ENCODE measurements at regions of chr6 and their contacts with region 1.

Region 1: GRCh38 chr6:144215932-144216667 is 65.8 kb downstream of the STX11 start:
- DNase-seq: peak; percentile 93 to 96
- ATAC-seq: peak; percentile 93 to 97 (median 95)
- H3K4me3 ChIP-seq: peak overlapping the region; percentile 23 to 73 (median 68)
- H3K27ac ChIP-seq: peak overlapping the region; percentile 87 to 97 (median 94)
- H3K4me1 ChIP-seq: peaks cover 0 to 31% (median 17%) of the 10 kb centered on the region in 9 donors
- H3K27me3 ChIP-seq: no peaks in the 10 kb centered on the region
- CTCF ChIP-seq: peak; percentile 56 to 75 (median 66)

Region 2: DNA sequence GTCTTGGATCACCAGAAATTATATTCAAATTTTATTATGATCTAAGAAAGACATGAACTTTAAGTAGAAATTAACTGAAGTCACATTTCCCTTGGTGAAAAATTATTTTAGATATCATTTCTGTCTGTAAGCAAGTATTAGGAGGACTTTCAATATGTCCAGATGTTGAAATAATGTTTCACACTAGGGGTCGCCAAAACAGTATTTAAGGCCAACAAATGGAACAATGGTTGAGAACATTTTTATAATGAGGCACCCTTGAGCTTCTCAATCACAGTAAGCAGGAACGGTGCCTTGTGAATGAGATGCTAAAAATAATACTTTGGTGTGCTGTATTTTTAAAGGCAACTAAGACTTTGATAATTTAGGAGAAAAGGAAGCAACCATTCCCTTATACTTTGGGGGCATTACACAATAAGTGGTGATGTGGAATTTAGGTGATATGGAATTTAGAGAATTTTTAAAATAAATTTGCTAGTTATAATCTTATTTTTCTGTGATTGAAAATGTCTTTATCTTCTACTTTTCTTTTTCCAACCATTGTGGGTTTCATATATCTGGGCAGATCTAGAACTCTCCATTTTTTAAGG is 111.1 kb before region 1 on chr6:
- intact Hi-C with region 1: loop called (anchors 1 to 5 kb)
- DNase-seq: peak in 1 of 2 donors; percentile 74
- ATAC-seq: peak; percentile 57 to 91 (median 87)
- H3K4me3 ChIP-seq: no peak overlapping the region
- H3K27ac ChIP-seq: no peak overlapping the region
- H3K4me1 ChIP-seq: peaks cover 0 to 6% (median 0%) of the 10 kb centered on the region in 9 donors
- H3K27me3 ChIP-seq: no peaks in the 10 kb centered on the region
- CTCF ChIP-seq: peak; percentile 48 to 87 (median 72)

Region 3: DNA sequence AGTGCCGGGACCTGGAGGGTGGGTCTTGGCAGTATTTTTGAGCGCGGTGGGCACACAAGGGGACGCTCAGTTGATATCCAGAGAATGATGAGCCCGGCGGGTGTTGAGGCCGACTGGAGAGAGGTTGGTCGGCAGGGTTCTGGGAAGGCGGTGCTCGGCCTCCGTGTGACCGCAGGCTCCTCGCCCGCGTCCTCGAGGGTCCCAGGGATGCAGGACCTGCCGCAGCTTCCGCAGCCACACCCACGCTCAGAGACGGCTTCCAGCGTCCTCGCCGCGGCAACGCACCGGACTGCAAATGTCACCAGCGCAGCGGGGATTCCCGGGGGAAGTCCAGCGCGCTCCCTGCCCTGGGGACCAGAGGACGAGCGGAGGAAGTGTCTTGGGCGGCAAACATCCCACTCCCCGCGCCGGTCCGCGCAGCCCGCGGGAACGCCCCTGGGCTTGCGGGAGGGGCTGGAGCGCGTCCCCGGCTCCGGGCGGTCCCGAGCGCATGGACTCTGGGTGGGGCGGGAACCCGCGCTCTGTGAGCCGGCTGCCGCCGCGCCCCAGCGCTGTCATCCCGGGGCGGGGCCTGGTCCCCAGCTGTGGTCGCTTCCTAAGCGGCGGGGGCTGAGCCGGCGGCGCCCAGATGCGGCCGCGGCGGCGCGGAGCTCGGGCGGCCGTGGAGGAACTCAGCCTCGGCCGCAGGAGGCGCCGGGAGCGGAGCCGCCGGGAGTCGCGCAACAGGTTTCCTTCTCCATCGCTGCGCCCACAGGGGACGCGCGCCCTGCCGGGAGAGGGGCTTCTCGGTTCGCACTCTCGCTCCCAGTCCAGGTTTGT is 66.0 kb before region 1 on chr6 and contains the start of gene STX11:
- intact Hi-C with region 1: loop called in 9 of 10 experiments (anchors 1 to 10 kb)
- DNase-seq: peak; percentile 73 to 80
- ATAC-seq: peak; percentile 93 to 98 (median 94)
- H3K4me3 ChIP-seq: peak within 1 kb of the TSS; percentile 59 to 85 (median 78)
- H3K27ac ChIP-seq: peak within 1 kb of the TSS in 9 of 10 donors; percentile 46 to 94 (median 79)
- H3K4me1 ChIP-seq: peaks cover 0 to 47% (median 13%) of the 10 kb centered on the region in 9 donors
- H3K27me3 ChIP-seq: no peaks in the 10 kb centered on the region
- CTCF ChIP-seq: no peak
- total RNA-seq, gene STX11: 6.9 to 15.9 (median 8.9) TPM

Region 4: DNA sequence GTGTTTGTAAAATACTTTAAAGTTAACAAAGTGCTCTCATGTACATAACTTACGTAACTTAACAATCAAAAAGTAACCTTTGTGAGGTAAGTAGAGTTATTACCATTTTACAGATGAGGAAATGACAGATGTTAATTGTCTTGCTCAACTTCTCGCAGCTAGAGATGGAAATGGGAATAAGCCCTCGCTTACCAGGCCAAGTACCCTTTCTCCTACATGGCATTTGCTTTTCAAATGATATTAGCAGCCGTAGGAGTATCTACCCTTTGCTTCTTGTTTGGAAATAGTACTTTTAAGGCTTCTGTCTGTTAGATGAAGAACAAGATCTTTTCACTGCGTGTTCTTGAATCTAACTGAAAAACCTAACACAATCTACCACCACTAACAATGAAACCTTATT is 50.3 kb before region 1 on chr6:
- intact Hi-C with region 1: no loop called
- DNase-seq: no peak
- ATAC-seq: no peak
- H3K4me3 ChIP-seq: no peak overlapping the region
- H3K27ac ChIP-seq: no peak overlapping the region
- H3K4me1 ChIP-seq: peaks cover 0 to 26% (median 0%) of the 10 kb centered on the region in 9 donors
- H3K27me3 ChIP-seq: no peaks in the 10 kb centered on the region
- CTCF ChIP-seq: no peak

Region 5: DNA sequence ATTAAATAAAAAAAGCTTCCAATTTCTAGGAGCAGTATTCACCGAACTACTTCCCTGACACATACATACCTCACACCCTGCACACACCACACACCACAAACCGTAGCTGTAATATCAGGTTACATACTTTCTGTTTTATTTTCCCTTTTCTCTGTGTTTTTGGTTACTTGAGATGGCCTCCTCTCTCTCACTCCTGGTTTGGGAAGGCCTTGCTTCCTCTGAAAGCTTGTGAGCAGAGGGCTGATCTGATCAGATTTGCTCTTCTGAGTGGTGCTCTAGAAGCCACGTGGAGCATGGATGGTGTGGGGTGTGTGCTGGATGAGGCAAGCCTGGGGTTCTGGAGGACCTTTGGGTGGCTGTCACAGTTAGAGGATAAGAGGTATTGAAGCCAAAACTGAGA is 89.9 kb after region 1 on chr6:
- intact Hi-C with region 1: no loop called
- DNase-seq: no peak
- ATAC-seq: no peak
- H3K4me3 ChIP-seq: no peak overlapping the region
- H3K27ac ChIP-seq: no peak overlapping the region
- H3K4me1 ChIP-seq: peaks cover 0 to 44% (median 12%) of the 10 kb centered on the region in 9 donors
- H3K27me3 ChIP-seq: no peaks in the 10 kb centered on the region
- CTCF ChIP-seq: no peak

Region 6: DNA sequence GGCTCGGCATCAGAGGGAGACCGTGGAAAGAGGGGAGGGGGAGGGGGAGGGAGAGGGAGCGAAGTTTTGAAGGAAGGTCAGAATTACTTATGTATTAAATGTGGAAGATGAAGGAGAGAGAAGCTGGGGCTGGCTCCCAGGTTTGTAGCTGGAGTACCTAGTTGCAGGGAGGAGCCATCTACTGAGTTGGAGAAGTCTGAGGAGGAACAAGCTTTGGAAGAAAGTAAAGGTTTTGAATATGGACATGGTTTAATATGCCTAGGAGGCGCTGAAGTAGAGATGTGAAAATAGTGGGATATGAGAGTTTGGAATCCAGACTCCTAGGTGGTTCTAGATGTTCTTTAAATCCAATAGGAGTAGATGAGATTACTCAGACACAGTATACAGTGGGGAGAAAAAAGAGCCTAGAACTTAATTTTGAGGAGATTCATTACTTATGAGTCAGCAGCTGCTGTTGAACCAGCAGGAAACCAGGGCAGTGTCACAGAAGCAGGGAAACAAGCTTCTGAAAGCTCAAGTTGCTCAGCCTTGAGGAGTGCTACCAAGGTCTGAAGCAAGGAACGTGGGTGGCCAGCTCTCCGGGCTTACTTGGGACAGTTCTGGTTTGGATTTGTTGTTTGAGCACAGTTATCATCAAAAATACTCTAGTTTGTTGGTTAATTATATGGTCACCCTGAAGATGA is 218.3 kb after region 1 on chr6:
- intact Hi-C with region 1: loop called in 1 of 10 experiments (anchors 5 kb)
- DNase-seq: no peak
- ATAC-seq: peak in 6 of 8 donors; percentile 16 to 64 (median 48)
- H3K4me3 ChIP-seq: no peak overlapping the region
- H3K27ac ChIP-seq: peak overlapping the region in 2 of 10 donors; percentile 52 to 61
- H3K4me1 ChIP-seq: peaks cover 3 to 50% (median 18%) of the 10 kb centered on the region in 9 donors
- H3K27me3 ChIP-seq: no peaks in the 10 kb centered on the region
- CTCF ChIP-seq: no peak